ENCODE measurements at regions of chr10 and their contacts with region 1.

Region 1: GRCh38 chr10:94439275-94439861 is 37.0 kb downstream of the TBC1D12 start:
- DNase-seq: no peak
- H3K4me3 ChIP-seq: no peak overlapping the region
- H3K27ac ChIP-seq: no peak overlapping the region
- H3K4me1 ChIP-seq: no peaks in the 10 kb centered on the region
- CTCF ChIP-seq: no peak

Region 2: GRCh38 chr10:94279835-94280709 is 159.3 kb before region 1 on chr10:
- CTCF ChIA-PET with region 1: no interaction called
- POLR2A ChIA-PET with region 1: interaction called, 7 read pairs
- intact Hi-C with region 1: loop called (anchors 1 kb)
- DNase-seq: peak; percentile 57
- H3K4me3 ChIP-seq: no peak overlapping the region
- H3K27ac ChIP-seq: no peak overlapping the region
- H3K4me1 ChIP-seq: no peaks in the 10 kb centered on the region
- CTCF ChIP-seq: peak; percentile 96

Measured in OCI-LY7 (cell line).